A673 (cell line): ENCODE measurements at regions of chr5 and their contacts with region 1.

Region 1: GRCh38 chr5:150689120-150689519 is 11.7 kb downstream of the RBM22 start:
- DNase-seq: no peak
- H3K4me3 ChIP-seq: no peak overlapping the region
- H3K27ac ChIP-seq: no peak overlapping the region
- H3K4me1 ChIP-seq: no peaks in the 10 kb centered on the region
- H3K27me3 ChIP-seq: no peaks in the 10 kb centered on the region
- CTCF ChIP-seq: no peak

Region 2: DNA sequence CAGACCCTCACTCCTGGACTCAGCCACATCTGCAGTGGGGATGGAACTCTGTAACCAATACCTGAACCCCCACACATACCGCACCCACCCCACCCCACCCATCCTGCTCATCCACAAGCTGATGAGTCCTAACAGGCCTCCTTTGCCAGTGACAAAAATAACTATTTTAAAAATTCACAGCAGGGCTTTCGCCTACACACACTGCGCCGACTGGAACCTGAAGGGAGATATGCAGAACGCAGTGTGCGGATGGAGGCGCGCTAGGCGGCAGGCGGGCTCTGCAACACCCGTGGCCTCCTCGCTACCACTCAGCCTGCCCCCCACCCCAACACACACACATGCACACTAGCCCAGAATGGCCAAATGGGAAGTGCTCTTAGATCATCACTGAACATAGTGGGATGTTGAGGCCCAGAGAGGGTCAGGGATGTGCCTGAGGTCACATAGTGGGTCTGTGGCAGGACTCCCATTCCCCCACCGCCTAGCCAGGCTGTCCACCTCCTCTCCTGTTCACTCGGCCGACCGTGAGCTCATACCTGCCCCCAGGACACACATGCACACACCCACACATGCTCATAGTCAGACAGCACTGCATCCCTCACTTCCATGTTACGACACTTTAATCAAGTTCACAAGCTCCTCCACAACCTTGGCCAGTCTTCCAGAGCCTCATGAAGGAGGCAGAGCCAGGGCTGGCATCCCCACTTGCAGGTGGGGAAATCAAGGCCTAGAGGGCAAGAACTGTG is 393.2 kb before region 1 on chr5:
- CTCF ChIA-PET with region 1: no interaction called
- POLR2A ChIA-PET with region 1: interaction called, 17 read pairs
- intact Hi-C with region 1: no loop called
- DNase-seq: no peak
- H3K4me3 ChIP-seq: no peak overlapping the region
- H3K27ac ChIP-seq: no peak overlapping the region
- H3K4me1 ChIP-seq: peaks cover 24% of the 10 kb centered on the region
- H3K27me3 ChIP-seq: no peaks in the 10 kb centered on the region
- CTCF ChIP-seq: no peak

Region 3: DNA sequence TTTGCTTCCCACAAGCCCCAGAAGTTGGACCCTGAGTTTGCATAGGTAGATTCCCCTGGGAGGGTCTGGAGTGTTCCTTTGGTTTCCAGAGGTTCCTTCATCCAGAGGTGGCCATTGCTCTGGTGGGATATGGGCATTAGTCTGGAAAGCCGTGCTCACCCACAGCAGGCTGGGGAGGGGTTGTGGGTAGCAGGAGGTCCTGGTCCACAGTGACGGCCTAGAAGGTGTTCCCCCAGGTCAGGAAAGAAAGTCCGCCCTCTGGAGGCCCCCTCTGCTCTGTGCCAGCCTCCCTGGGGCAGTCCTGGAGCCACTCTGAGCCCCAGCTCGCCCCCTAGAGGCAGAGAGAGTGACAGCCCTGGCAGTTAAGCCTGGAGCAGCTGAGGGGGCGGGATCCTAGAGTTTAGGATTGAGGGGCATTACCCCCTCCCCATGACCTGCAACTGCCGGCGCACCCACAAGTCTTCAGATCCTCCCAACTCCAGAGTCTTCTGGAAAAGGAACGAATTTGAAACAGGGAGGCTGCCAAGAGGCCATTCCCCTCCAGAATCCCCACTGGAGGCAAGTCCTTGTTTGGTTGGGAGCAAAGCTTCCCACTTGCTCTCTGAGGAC is 144.4 kb before region 1 on chr5:
- CTCF ChIA-PET with region 1: no interaction called
- POLR2A ChIA-PET with region 1: no interaction called
- intact Hi-C with region 1: no loop called
- DNase-seq: peak; percentile 81
- H3K4me3 ChIP-seq: no peak overlapping the region
- H3K27ac ChIP-seq: no peak overlapping the region
- H3K4me1 ChIP-seq: no peaks in the 10 kb centered on the region
- H3K27me3 ChIP-seq: no peaks in the 10 kb centered on the region
- CTCF ChIP-seq: peak; percentile 96

Region 4: GRCh38 chr5:150816946-150817345 is 127.8 kb after region 1 on chr5:
- CTCF ChIA-PET with region 1: no interaction called
- POLR2A ChIA-PET with region 1: no interaction called
- intact Hi-C with region 1: no loop called
- DNase-seq: no peak
- H3K4me3 ChIP-seq: no peak overlapping the region
- H3K27ac ChIP-seq: no peak overlapping the region
- H3K4me1 ChIP-seq: no peaks in the 10 kb centered on the region
- H3K27me3 ChIP-seq: no peaks in the 10 kb centered on the region
- CTCF ChIP-seq: no peak